ENCODE measurements at regions of chr1 and their contacts with region 1.

Region 1: GRCh38 chr1:31639543-31639942 is 5.1 kb downstream of the PEF1 start:
- DNase-seq: peak; percentile 46
- H3K4me3 ChIP-seq: no peak overlapping the region
- CTCF ChIP-seq: no peak

Region 2: GRCh38 chr1:31584041-31584868 is 55.3 kb before region 1 on chr1:
- CTCF ChIA-PET with region 1: no interaction called
- POLR2A ChIA-PET with region 1: no interaction called
- DNase-seq: no peak
- H3K4me3 ChIP-seq: no peak overlapping the region
- CTCF ChIP-seq: no peak

Region 3: DNA sequence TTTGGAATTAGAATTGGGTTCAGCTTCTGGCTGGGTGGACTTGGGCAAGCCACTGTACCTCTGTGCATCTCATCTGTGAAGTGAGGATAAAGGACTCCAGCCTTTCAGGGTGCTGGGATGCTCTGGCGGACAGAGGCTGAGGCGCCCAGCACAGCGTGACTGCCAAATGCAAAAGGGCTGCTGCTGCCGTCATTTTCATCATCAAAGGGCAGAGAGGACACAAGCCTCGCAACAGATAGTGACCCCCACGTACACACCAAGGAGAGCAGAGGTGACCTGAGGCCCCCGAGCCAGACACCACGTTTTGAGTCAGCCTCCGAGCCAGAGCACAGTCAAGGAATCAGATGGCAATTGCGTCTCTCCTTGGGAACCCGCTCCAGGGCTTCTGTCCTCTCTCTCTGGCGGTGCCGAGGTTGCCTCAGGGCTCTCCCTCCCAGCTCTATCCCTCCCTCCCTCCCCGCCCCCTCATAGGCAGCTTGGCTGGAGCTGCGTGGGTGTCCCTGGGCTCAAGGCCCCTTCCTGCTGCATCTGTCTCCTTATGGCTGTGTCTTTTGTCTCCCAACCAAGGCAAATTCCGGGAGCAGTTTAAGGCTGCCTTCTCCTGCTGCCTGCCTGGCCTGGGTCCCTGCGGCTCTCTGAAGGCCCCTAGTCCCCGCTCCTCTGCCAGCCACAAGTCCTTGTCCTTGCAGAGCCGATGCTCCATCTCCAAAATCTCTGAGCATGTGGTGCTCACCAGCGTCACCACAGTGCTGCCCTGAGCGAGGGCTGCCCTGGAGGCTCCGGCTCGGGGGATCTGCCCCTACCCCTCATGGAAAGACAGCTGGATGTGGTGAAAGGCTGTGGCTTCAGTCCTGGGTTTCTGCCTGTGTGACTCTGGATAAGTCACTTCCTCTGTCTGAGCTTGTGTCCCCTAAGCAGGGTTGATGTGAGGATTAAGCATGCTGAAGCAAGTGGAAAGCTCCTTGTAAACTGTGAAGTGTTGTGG is 13.0 kb before region 1 on chr1:
- CTCF ChIA-PET with region 1: interaction called, 22 read pairs
- POLR2A ChIA-PET with region 1: interaction called, 4 read pairs
- DNase-seq: no peak
- H3K4me3 ChIP-seq: no peak overlapping the region
- CTCF ChIP-seq: no peak

Measured in AG04449 (cell line).